ENCODE measurements at regions of chr6 and their contacts with region 1.

Region 1: GRCh38 chr6:109009236-109009961 is 85.2 kb downstream of the SESN1 start:
- DNase-seq: peak; percentile 83 to 96 (median 93)
- ATAC-seq: peak; percentile 96
- H3K4me3 ChIP-seq: peak overlapping the region; percentile 72 to 94
- H3K4me3 Mint-ChIP-seq: peak overlapping the region; percentile 98
- H3K27ac ChIP-seq: peak overlapping the region; percentile 89 to 92
- H3K27ac Mint-ChIP-seq: peak overlapping the region; percentile 100
- H3K4me1 ChIP-seq: peaks cover 53% of the 10 kb centered on the region
- H3K4me1 Mint-ChIP-seq: peaks cover 71% of the 10 kb centered on the region
- H3K27me3 ChIP-seq: no peaks in the 10 kb centered on the region
- H3K27me3 Mint-ChIP-seq: no peaks in the 10 kb centered on the region
- CTCF ChIP-seq: no peak

Region 2: GRCh38 chr6:108260809-108261569 is 748.4 kb before region 1 on chr6 and contains the start of gene SNX3:
- CTCF ChIA-PET with region 1: no interaction called
- POLR2A ChIA-PET with region 1: no interaction called
- intact Hi-C with region 1: loop called (anchors 2 to 10 kb)
- DNase-seq: peak; percentile 76 to 95 (median 85)
- ATAC-seq: peak; percentile 79
- H3K4me3 ChIP-seq: peak within 1 kb of the TSS; percentile 64 to 76
- H3K4me3 Mint-ChIP-seq: peak within 1 kb of the TSS; percentile 89
- H3K27ac ChIP-seq: peak within 1 kb of the TSS; percentile 82 to 95
- H3K27ac Mint-ChIP-seq: peak within 1 kb of the TSS; percentile 97
- H3K4me1 ChIP-seq: peaks cover 17% of the 10 kb centered on the region
- H3K4me1 Mint-ChIP-seq: peaks cover 36% of the 10 kb centered on the region
- H3K27me3 ChIP-seq: no peaks in the 10 kb centered on the region
- H3K27me3 Mint-ChIP-seq: no peaks in the 10 kb centered on the region
- CTCF ChIP-seq: no peak
- total RNA-seq, gene SNX3: 37.0 to 40.7 TPM

Region 3: DNA sequence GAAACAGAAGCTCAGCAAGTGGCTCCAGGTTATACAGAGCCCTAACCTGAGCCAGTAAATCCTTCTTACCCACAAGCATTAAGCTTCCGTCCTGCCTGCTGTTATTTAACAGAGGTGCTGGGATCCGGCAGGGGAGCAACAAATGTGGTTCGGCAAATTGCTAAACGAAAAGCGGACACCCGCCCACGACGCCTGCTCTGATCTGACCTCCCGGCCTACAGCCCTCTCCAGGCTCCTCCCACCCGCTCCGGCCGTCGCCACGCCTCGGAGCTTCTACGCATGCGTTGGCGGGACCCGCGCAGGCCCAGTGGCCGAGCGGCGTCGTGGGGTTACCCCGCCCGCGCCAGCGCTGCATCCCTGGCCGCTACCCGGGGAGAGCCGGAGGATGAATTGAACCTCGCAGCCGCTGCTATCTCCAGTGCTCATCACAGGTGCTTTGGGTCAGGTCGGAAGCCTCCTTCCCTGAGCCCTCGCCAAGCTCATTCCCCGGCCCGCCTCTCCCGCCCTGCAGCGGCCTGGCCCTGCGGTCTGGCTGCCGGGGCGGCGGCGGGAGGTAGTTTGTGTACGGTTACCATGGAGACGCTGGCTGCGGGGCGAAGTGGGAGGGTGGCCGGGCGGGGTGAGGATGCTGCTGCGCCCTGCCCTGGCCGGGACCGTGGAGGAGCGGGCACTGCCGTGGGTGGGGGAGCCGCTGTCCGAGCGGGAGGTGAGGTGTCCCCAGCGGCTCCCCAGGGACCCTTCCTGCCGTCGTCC is 161.1 kb before region 1 on chr6 and contains the start of gene ARMC2:
- CTCF ChIA-PET with region 1: no interaction called
- POLR2A ChIA-PET with region 1: interaction called, 11 read pairs
- intact Hi-C with region 1: loop called (anchors 1 to 5 kb)
- DNase-seq: peak; percentile 65 to 94 (median 85)
- ATAC-seq: peak; percentile 88
- H3K4me3 ChIP-seq: peak within 1 kb of the TSS; percentile 63 to 80
- H3K4me3 Mint-ChIP-seq: peak within 1 kb of the TSS; percentile 88
- H3K27ac ChIP-seq: peak within 1 kb of the TSS; percentile 67 to 73
- H3K27ac Mint-ChIP-seq: peak within 1 kb of the TSS; percentile 66
- H3K4me1 ChIP-seq: peaks cover 11% of the 10 kb centered on the region
- H3K4me1 Mint-ChIP-seq: peaks cover 29% of the 10 kb centered on the region
- H3K27me3 ChIP-seq: no peaks in the 10 kb centered on the region
- H3K27me3 Mint-ChIP-seq: no peaks in the 10 kb centered on the region
- CTCF ChIP-seq: no peak
- total RNA-seq, gene ARMC2: 4.2 to 6.1 TPM

Region 4: DNA sequence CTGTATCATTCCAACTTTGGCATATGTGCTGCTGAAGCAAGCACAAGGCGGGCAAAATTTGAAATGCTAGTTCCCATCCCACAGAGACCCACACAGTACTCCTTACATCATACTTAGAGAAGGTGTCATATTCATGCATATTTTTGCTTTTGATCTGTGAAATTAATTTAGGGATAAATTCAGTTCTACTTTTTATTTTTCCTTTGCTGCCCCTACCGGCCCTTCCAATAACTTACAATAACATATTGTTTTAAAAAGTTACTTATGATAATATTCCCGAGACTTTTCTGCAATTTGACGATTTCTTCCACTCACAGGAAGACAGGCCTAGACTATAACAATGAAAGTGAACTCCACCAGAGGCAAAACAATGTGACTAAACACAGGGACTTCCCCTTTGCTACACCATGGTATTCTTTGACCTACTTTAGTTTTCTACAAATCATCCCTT is 50.2 kb after region 1 on chr6:
- CTCF ChIA-PET with region 1: interaction called, 3 read pairs
- POLR2A ChIA-PET with region 1: interaction called, 4 read pairs
- intact Hi-C with region 1: loop called in 1 of 2 experiments (anchors 5 kb)
- DNase-seq: peak in 2 of 9 experiments; percentile 74 to 83
- ATAC-seq: peak; percentile 99
- H3K4me3 ChIP-seq: no peak overlapping the region
- H3K4me3 Mint-ChIP-seq: peak overlapping the region; percentile 50
- H3K27ac ChIP-seq: peak overlapping the region; percentile 12 to 74
- H3K27ac Mint-ChIP-seq: peak overlapping the region; percentile 94
- H3K4me1 ChIP-seq: peaks cover 23% of the 10 kb centered on the region
- H3K4me1 Mint-ChIP-seq: peaks cover 47% of the 10 kb centered on the region
- H3K27me3 ChIP-seq: no peaks in the 10 kb centered on the region
- H3K27me3 Mint-ChIP-seq: no peaks in the 10 kb centered on the region
- CTCF ChIP-seq: no peak

Region 5: DNA sequence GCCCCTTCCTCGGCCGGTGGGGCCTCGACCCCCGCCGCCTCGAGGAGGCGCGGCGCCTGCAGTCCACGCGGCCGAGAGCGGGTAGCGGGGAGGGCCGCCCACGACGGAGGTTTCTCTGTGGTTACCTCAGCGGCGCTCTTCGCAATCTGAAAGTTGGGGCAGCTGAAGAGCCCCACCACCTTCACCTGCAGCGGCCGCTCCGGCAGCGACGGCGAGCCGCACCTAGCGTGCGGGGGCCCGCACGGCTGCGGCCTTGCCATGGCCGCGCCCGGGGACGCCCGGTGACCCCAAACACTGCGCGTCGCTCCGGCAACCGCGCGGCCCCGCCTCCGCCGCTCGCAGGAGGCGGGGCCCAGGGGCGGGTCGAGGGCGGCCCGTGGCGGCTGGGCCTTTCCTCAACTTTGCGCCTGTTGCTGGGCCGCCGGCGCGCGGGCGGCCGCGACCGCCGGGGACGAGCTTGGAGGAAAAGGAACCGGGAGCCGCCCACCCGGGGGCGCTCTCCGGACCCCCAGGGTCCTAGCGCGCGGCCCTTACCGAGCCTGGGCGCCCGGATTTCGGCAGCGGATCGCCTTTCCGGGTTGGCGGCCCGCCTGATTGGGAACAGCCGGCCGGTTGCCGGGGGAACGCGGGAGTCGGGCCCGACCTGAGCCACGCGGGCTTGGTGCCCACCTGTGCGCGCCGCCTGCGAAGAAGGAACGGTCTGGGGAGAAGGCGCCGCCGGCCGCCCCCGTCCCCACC is 431.1 kb after region 1 on chr6 and contains the starts of genes PPIL6 and SMPD2:
- CTCF ChIA-PET with region 1: no interaction called
- POLR2A ChIA-PET with region 1: no interaction called
- intact Hi-C with region 1: loop called in 1 of 2 experiments (anchors 1 kb)
- DNase-seq: peak; percentile 61 to 92 (median 75)
- ATAC-seq: peak; percentile 79
- H3K4me3 ChIP-seq: peak within 1 kb of the TSS; percentile 68 to 92
- H3K4me3 Mint-ChIP-seq: peak within 1 kb of the TSS; percentile 89
- H3K27ac ChIP-seq: peak within 1 kb of the TSS; percentile 69 to 83
- H3K27ac Mint-ChIP-seq: peak within 1 kb of the TSS; percentile 93
- H3K4me1 ChIP-seq: peaks cover 26% of the 10 kb centered on the region
- H3K4me1 Mint-ChIP-seq: peaks cover 35% of the 10 kb centered on the region
- H3K27me3 ChIP-seq: no peaks in the 10 kb centered on the region
- H3K27me3 Mint-ChIP-seq: no peaks in the 10 kb centered on the region
- CTCF ChIP-seq: peak; percentile 31
- total RNA-seq, gene PPIL6: 1.3 to 1.4 TPM
- total RNA-seq, gene SMPD2: 22.8 to 23.9 TPM